GM12878 (cell line): ENCODE measurements at regions of chr2 and their contacts with region 1.

Region 1: DNA sequence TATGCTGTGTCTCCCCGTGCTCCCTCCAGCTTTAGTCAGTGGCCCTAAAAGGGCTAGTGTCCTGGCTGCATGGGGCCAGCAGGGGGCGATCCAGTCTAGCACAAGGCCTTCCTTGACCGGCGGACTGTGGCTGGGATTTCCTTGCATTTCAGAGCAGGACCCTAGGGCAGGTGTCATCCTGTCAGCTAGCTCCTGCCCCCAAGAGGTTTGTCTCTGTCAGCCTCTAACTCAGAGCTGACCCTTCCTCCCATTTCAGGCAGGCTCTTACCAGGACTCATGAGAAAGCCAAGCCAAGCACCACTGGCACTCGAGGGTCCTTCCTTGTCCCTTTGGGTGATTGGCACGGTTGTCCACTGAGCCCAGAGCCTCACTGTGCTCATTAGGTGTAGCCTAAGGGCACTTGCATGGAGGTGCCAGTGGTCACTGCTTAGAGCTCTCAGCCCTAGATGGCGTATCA is 140.3 kb downstream of the RPIA start:
- DNase-seq: no peak
- ATAC-seq: peak; percentile 98
- H3K4me3 ChIP-seq: no peak overlapping the region
- H3K27ac ChIP-seq: no peak overlapping the region; the same call in 1 of the 2 replicates
- H3K4me1 ChIP-seq: no peaks in the 10 kb centered on the region
- H3K27me3 ChIP-seq: no peaks in the 10 kb centered on the region
- CTCF ChIP-seq: peak; percentile 88 to 95 (median 89)
- EP300 ChIP-seq: no peak
- POLR2A ChIP-seq: no peak
- RAD21 ChIP-seq: peak; percentile 90

Region 2: GRCh38 chr2:88739985-88740600 is 91.7 kb before region 1 on chr2:
- CTCF ChIA-PET with region 1: interaction called, 3 read pairs
- POLR2A ChIA-PET with region 1: no interaction called
- RAD21 ChIA-PET with region 1: no interaction called
- SMC1A ChIA-PET with region 1: no interaction called
- in situ Hi-C with region 1: no loop called
- intact Hi-C with region 1: loop called (anchors 1 kb)
- DNase-seq: peak; percentile 42
- ATAC-seq: no peak; the same call in none of the 3 replicates
- H3K4me3 ChIP-seq: no peak overlapping the region
- H3K27ac ChIP-seq: no peak overlapping the region
- H3K4me1 ChIP-seq: no peaks in the 10 kb centered on the region
- H3K27me3 ChIP-seq: no peaks in the 10 kb centered on the region
- CTCF ChIP-seq: peak; percentile 88 to 96 (median 93)
- EP300 ChIP-seq: no peak
- POLR2A ChIP-seq: no peak
- RAD21 ChIP-seq: peak; percentile 89

Region 3: DNA sequence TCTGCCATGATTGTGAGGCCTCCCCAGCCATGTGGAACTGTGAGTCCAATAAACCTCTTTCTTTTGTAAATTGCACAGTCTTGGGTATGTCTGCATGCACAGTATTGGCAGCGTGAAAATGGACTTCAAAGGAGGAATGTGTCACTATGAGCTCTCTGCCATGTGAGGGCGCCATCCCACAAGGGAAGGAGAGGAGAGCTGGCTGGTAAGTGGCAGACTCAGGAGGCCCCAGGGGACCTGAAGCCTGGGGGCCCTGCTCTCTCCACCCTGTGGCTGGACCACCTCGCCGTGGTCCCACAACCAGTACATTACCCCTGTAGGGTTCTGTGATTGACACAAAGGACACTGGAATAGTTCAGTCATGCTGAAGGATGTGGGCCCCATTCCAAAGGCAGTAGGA is 18.2 kb before region 1 on chr2:
- CTCF ChIA-PET with region 1: no interaction called
- POLR2A ChIA-PET with region 1: no interaction called
- RAD21 ChIA-PET with region 1: no interaction called
- SMC1A ChIA-PET with region 1: no interaction called
- in situ Hi-C with region 1: no loop called
- intact Hi-C with region 1: no loop called
- DNase-seq: no peak
- ATAC-seq: no peak
- H3K4me3 ChIP-seq: no peak overlapping the region
- H3K27ac ChIP-seq: no peak overlapping the region
- H3K4me1 ChIP-seq: no peaks in the 10 kb centered on the region
- H3K27me3 ChIP-seq: no peaks in the 10 kb centered on the region
- CTCF ChIP-seq: no peak
- EP300 ChIP-seq: no peak
- POLR2A ChIP-seq: no peak
- RAD21 ChIP-seq: 0 out of 2 replicates have a peak, but pooled peaks have one; percentile 12

Region 4: GRCh38 chr2:88845772-88846661 is 14.2 kb after region 1 on chr2:
- CTCF ChIA-PET with region 1: no interaction called
- POLR2A ChIA-PET with region 1: no interaction called
- RAD21 ChIA-PET with region 1: no interaction called
- SMC1A ChIA-PET with region 1: no interaction called
- in situ Hi-C with region 1: no loop called
- intact Hi-C with region 1: no loop called
- DNase-seq: no peak
- ATAC-seq: no peak
- H3K4me3 ChIP-seq: no peak overlapping the region
- H3K27ac ChIP-seq: peak overlapping the region; percentile 63
- H3K4me1 ChIP-seq: no peaks in the 10 kb centered on the region
- H3K27me3 ChIP-seq: no peaks in the 10 kb centered on the region
- CTCF ChIP-seq: no peak
- EP300 ChIP-seq: no peak
- POLR2A ChIP-seq: no peak
- RAD21 ChIP-seq: no peak

Region 5: DNA sequence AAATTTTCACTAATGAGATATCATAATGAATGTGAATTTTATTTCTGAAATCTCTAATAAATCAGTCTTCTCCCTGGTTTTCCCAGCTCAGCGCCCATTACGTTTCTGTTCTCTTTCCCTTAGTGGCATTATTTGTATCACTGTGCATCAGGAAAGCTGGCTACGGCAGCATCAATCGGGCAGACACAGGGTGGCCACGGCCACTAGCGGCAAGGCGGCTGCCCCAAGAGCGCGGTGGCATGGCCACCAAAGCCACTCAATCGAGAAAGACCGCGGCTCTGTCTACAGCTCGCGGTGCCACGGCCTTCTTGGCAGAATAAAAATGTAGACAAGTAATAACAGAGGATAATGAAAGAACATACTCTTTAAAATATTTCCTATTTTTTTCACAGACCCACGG is 27.6 kb after region 1 on chr2:
- CTCF ChIA-PET with region 1: interaction called, 50 read pairs
- POLR2A ChIA-PET with region 1: no interaction called
- RAD21 ChIA-PET with region 1: interaction called, 4 read pairs
- SMC1A ChIA-PET with region 1: interaction called, 25 read pairs
- in situ Hi-C with region 1: no loop called
- intact Hi-C with region 1: no loop called
- DNase-seq: no peak
- ATAC-seq: no peak
- H3K4me3 ChIP-seq: peak overlapping the region; percentile 50; the same call in 1 of the 2 replicates
- H3K27ac ChIP-seq: peak overlapping the region; percentile 25
- H3K4me1 ChIP-seq: no peaks in the 10 kb centered on the region
- H3K27me3 ChIP-seq: no peaks in the 10 kb centered on the region
- CTCF ChIP-seq: no peak
- EP300 ChIP-seq: no peak
- POLR2A ChIP-seq: peak; percentile 21; the same call in 1 of the 2 replicates
- RAD21 ChIP-seq: no peak